Caco-2 (cell line): ENCODE measurements at regions of chr14 and their contacts with region 1.

Region 1: GRCh38 chr14:85987292-85987691 is 457.3 kb downstream of the FLRT2 start:
- DNase-seq: no peak
- H3K4me3 ChIP-seq: no peak overlapping the region
- H3K4me3 Mint-ChIP-seq: no peak overlapping the region
- H3K27ac Mint-ChIP-seq: no peak overlapping the region
- H3K4me1 ChIP-seq: no peaks in the 10 kb centered on the region
- H3K4me1 Mint-ChIP-seq: no peaks in the 10 kb centered on the region
- H3K27me3 ChIP-seq: no peaks in the 10 kb centered on the region
- H3K27me3 Mint-ChIP-seq: no peaks in the 10 kb centered on the region
- CTCF ChIP-seq: no peak

Region 2: GRCh38 chr14:85934123-85934885 is 53.0 kb before region 1 on chr14:
- CTCF ChIA-PET with region 1: no interaction called
- POLR2A ChIA-PET with region 1: no interaction called
- intact Hi-C with region 1: no loop called
- DNase-seq: peak in 1 of 2 experiments; percentile 7
- H3K4me3 ChIP-seq: peak overlapping the region; percentile 30
- H3K4me3 Mint-ChIP-seq: peak overlapping the region; percentile 72
- H3K27ac Mint-ChIP-seq: no peak overlapping the region
- H3K4me1 ChIP-seq: no peaks in the 10 kb centered on the region
- H3K4me1 Mint-ChIP-seq: no peaks in the 10 kb centered on the region
- H3K27me3 ChIP-seq: no peaks in the 10 kb centered on the region
- H3K27me3 Mint-ChIP-seq: no peaks in the 10 kb centered on the region
- CTCF ChIP-seq: no peak

Region 3: GRCh38 chr14:86038387-86039042 is 51.2 kb after region 1 on chr14:
- CTCF ChIA-PET with region 1: no interaction called
- POLR2A ChIA-PET with region 1: no interaction called
- intact Hi-C with region 1: loop called (anchors 1 kb)
- DNase-seq: peak; percentile 36 to 52
- H3K4me3 ChIP-seq: no peak overlapping the region
- H3K4me3 Mint-ChIP-seq: no peak overlapping the region
- H3K27ac Mint-ChIP-seq: no peak overlapping the region
- H3K4me1 ChIP-seq: no peaks in the 10 kb centered on the region
- H3K4me1 Mint-ChIP-seq: no peaks in the 10 kb centered on the region
- H3K27me3 ChIP-seq: no peaks in the 10 kb centered on the region
- H3K27me3 Mint-ChIP-seq: no peaks in the 10 kb centered on the region
- CTCF ChIP-seq: peak; percentile 69 to 73